Spleen (tissue), 13 donors: ENCODE measurements at regions of chr17 and their contacts with region 1.

Region 1: DNA sequence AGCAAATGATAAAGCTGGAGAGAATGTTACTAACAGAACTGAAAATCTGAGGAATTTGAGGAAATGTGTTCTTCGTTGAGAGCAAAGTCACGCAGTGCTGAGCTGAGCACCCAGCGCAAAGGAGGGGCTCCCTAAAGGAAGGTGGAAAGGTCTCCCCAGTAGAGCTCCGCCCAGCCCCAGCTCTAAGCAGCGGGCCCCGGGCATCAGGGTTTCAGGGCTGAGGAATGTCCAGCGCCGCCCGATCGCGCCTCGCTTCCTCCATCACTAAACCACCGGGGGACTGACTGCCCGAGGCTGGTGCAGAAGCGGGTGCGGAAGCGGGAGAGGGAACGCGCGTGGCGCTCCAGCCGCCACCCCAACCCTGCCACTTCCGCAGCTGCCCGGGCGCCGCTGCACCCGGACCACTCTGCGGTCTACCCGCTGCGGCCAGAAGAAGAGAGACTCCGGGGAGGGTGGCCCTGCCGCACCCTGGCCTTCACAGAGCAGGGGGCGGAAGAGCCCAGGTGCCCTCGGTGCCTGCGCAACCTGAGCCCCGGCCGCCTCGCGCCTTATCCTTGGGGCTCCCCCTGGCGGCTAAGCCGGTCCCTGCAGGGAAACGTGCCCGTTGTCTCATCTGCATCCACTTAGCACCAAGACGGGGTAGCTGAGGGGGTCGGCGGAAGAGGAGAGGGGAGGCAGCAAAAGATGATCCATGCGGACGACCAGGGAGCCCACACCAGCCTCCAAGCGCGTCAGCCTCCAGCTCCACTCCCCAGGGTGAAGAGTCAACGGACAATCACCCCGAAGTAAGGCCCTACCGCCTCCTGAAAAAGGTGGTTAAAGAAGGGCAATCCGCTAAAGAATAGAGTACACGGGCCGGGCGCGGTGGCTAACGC is 12.4 kb upstream of the GUCY2D start:
- DNase-seq: peak; percentile 97
- H3K4me3 ChIP-seq: peak overlapping the region; percentile 42 to 79 (median 56)
- H3K27ac ChIP-seq: peak overlapping the region; percentile 65 to 88 (median 79)
- H3K4me1 ChIP-seq: peaks cover 8 to 26% (median 21%) of the 10 kb centered on the region in 6 donors
- H3K27me3 ChIP-seq: no peaks in the 10 kb centered on the region
- CTCF ChIP-seq: peak; percentile 92 to 99 (median 97)
- POLR2A ChIP-seq: no peak

Region 2: GRCh38 chr17:7825206-7825990 is 164.6 kb before region 1 on chr17:
- intact Hi-C with region 1: loop called (anchors 5 kb)
- DNase-seq: peak; percentile 15
- H3K4me3 ChIP-seq: no peak overlapping the region
- H3K27ac ChIP-seq: no peak overlapping the region
- H3K4me1 ChIP-seq: peaks cover 0 to 5% (median 0%) of the 10 kb centered on the region in 6 donors
- H3K27me3 ChIP-seq: peaks cover 0 to 6% (median 0%) of the 10 kb centered on the region in 7 donors
- CTCF ChIP-seq: no peak
- POLR2A ChIP-seq: no peak

Region 3: GRCh38 chr17:7862692-7863437 is 127.2 kb before region 1 on chr17:
- intact Hi-C with region 1: loop called (anchors 5 kb)
- DNase-seq: no peak
- H3K4me3 ChIP-seq: no peak overlapping the region
- H3K27ac ChIP-seq: no peak overlapping the region
- H3K4me1 ChIP-seq: peaks cover 7 to 46% (median 26%) of the 10 kb centered on the region in 6 donors
- H3K27me3 ChIP-seq: no peaks in the 10 kb centered on the region
- CTCF ChIP-seq: peak; percentile 61 to 95 (median 88)
- POLR2A ChIP-seq: no peak

Region 4: GRCh38 chr17:7915611-7916382 is 74.2 kb before region 1 on chr17 and contains the start of gene RNF227:
- intact Hi-C with region 1: loop called (anchors 2 kb)
- DNase-seq: peak; percentile 94
- H3K4me3 ChIP-seq: peak within 1 kb of the TSS; percentile 64 to 78 (median 76)
- H3K27ac ChIP-seq: peak within 1 kb of the TSS; percentile 83 to 94 (median 92)
- H3K4me1 ChIP-seq: peaks cover 12 to 39% (median 27%) of the 10 kb centered on the region in 6 donors
- H3K27me3 ChIP-seq: no peaks in the 10 kb centered on the region
- CTCF ChIP-seq: peak in 1 of 11 experiments; percentile 23
- POLR2A ChIP-seq: no peak
- total RNA-seq, gene RNF227: 2.5 to 20.7 (median 3.4) TPM

Region 5: DNA sequence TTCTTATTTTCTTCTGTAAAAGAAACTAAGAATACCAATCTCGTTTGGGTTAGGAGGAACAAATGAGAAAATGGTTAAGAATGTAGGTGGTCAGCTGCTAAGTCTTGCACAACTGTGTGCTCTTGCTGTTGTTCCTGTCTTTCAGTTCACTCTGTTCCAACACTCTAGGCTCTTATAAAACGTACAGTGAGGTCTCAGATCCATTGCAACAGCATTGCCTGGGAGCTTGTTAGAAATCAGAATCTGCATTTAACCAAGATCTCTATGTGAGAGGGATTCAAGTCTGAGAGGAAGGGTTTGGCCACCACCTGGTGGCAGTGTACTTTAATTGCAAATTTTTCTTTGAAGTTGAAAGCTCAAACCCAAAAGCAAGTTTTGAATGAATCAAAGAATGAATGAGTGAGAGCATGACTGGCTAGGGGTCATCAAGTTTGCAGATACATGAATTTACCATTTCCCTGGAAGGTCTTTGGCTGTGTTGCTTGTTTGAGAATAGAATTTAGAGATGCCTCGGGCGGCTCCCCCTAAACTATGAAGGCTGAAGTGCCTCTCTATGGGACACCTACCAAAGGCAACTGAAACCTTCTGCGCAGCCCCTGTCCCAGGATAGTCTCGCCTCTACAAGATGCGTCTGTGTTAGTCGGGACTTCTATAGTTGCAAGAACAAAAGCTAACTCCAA is 51.4 kb after region 1 on chr17:
- intact Hi-C with region 1: no loop called
- DNase-seq: no peak
- H3K4me3 ChIP-seq: no peak overlapping the region
- H3K27ac ChIP-seq: peak overlapping the region in 4 of 8 donors; percentile 7 to 78 (median 60)
- H3K4me1 ChIP-seq: peaks cover 0 to 45% (median 15%) of the 10 kb centered on the region in 6 donors
- H3K27me3 ChIP-seq: peaks cover 0 to 59% (median 23%) of the 10 kb centered on the region in 7 donors
- CTCF ChIP-seq: peak in 9 of 11 experiments; percentile 25 to 65 (median 50)
- POLR2A ChIP-seq: no peak

Region 6: DNA sequence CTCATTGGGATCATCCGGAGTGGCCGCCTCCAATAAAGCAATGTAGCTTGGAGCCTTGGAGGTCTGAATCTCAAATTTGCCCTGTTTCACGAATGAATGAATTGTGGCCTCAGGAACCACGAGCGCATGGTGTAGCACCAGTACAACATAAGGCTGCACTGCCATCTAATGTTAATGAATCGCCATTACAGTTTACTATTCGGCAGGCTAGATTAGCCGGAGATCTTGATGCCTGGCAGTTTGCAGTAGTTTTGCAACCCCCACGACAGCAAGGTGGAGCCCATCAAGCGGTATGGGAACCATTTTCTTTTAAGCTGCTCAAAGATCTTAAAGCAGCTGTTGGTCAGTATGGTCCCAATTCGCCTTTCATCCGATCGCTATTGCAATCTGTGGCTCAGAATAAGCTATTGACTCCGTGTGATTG is 67.7 kb after region 1 on chr17:
- intact Hi-C with region 1: loop called (anchors 10 kb)
- DNase-seq: peak; percentile 53
- H3K4me3 ChIP-seq: no peak overlapping the region
- H3K27ac ChIP-seq: no peak overlapping the region
- H3K4me1 ChIP-seq: peaks cover 0 to 39% (median 27%) of the 10 kb centered on the region in 6 donors
- H3K27me3 ChIP-seq: peaks cover 0 to 56% (median 35%) of the 10 kb centered on the region in 7 donors
- CTCF ChIP-seq: peak; percentile 69 to 92 (median 83)
- POLR2A ChIP-seq: no peak

Region 7: GRCh38 chr17:8091033-8091687 is 101.1 kb after region 1 on chr17:
- intact Hi-C with region 1: no loop called
- DNase-seq: peak; percentile 84
- H3K4me3 ChIP-seq: peak overlapping the region in 1 of 8 donors; percentile 24
- H3K27ac ChIP-seq: peak overlapping the region in 2 of 8 donors; percentile 41 to 46
- H3K4me1 ChIP-seq: peaks cover 0 to 27% (median 9%) of the 10 kb centered on the region in 6 donors
- H3K27me3 ChIP-seq: peaks cover 0 to 78% (median 0%) of the 10 kb centered on the region in 7 donors
- CTCF ChIP-seq: no peak
- POLR2A ChIP-seq: no peak

Region 8: GRCh38 chr17:8173056-8173870 is 183.2 kb after region 1 on chr17:
- intact Hi-C with region 1: no loop called
- DNase-seq: peak; percentile 84
- H3K4me3 ChIP-seq: peak overlapping the region in 7 of 8 donors; percentile 2 to 61 (median 30)
- H3K27ac ChIP-seq: peak overlapping the region; percentile 90 to 98 (median 96)
- H3K4me1 ChIP-seq: peaks cover 23 to 55% (median 46%) of the 10 kb centered on the region in 6 donors
- H3K27me3 ChIP-seq: no peaks in the 10 kb centered on the region
- CTCF ChIP-seq: peak in 1 of 11 experiments; percentile 6
- POLR2A ChIP-seq: peak; percentile 95 to 100 (median 100)